ENCODE measurements at regions of chr5 and their contacts with region 1.

Region 1: GRCh38 chr5:180291943-180292831 is at the start of gene MAPK9:
- DNase-seq: peak; percentile 85
- ATAC-seq: peak; percentile 87
- H3K4me3 Mint-ChIP-seq: peak within 1 kb of the TSS; percentile 90
- H3K27ac Mint-ChIP-seq: peak within 1 kb of the TSS; percentile 98
- H3K4me1 Mint-ChIP-seq: peaks cover 37% of the 10 kb centered on the region
- H3K27me3 Mint-ChIP-seq: no peaks in the 10 kb centered on the region
- total RNA-seq, gene MAPK9: 42.6 to 44.6 TPM

Region 2: DNA sequence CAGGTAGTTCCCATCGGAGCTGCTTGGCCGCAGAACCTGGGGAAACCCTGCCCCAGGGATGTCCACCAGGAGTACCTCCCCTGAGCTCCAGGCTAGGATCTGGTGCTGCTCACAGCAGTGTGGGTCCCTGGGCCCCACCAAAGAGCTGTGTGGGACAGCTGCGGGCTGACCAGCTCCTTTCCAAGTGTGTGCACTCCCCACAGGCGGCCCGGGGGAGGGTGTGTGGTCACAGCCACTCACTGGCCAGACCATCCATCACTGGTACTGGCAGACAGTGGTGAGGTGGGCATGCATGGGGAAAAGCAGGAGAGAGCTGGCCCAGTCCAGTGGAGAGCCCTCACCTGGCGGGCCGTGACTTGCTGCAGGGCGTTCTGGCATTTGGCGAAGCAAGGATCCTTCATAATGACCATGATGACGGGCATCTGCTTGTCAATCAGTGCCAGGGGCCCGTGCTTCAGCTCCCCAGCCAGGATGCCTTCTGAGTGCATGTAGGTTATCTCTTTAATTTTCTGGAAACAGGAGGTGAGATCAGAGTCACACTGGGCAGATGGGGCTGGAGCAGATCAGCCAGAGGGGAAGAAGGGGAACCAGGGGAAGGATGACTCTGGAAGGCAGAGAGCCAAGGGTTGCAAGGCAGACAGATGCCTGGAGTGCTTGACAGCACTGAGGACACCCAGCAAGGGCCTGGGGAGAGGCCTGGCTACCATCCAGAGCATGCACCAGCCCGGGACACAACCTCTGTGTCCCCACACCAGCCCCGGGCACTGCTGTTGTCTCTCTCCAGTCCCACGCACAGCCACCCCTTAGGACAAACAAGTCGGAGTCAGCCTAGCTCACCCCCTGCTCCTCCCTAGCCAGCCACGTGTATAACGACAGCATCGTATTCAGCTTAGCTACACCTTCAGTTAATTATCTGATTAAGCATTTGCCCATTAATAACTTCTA is 12.5 kb after region 1 on chr5:
- CTCF ChIA-PET with region 1: interaction called, 10 read pairs
- POLR2A ChIA-PET with region 1: no interaction called
- DNase-seq: no peak
- ATAC-seq: no peak
- H3K4me3 Mint-ChIP-seq: no peak overlapping the region
- H3K27ac Mint-ChIP-seq: no peak overlapping the region
- H3K4me1 Mint-ChIP-seq: no peaks in the 10 kb centered on the region
- H3K27me3 Mint-ChIP-seq: peaks cover 4% of the 10 kb centered on the region

Region 3: DNA sequence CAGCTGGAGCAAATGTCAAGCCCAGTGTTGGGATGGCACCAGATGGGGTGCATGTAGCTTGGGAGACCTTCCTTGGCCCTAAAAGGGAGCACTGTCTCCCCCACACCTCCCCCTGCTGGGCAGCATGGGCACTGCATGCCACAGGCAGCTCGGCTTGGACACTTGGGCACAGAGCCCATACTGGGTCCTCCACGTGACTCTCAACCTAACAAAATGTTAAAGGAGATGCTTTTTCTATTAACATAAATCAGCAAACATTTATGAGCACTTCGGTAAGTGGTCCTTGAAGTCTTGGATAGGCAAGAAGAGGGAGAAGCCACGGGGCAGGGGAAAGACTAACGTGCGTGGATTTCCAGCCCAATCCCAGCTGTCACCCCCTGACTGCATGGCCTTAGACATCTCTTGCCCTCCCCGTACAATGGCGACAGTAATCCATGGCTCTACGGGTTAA is 23.6 kb after region 1 on chr5:
- CTCF ChIA-PET with region 1: interaction called, 100 read pairs
- POLR2A ChIA-PET with region 1: no interaction called
- DNase-seq: peak; percentile 72
- ATAC-seq: peak; percentile 74
- H3K4me3 Mint-ChIP-seq: no peak overlapping the region
- H3K27ac Mint-ChIP-seq: no peak overlapping the region
- H3K4me1 Mint-ChIP-seq: no peaks in the 10 kb centered on the region
- H3K27me3 Mint-ChIP-seq: no peaks in the 10 kb centered on the region

Region 4: GRCh38 chr5:180470966-180471582 is 178.9 kb after region 1 on chr5:
- CTCF ChIA-PET with region 1: interaction called, 32 read pairs
- POLR2A ChIA-PET with region 1: interaction called, 4 read pairs
- DNase-seq: peak; percentile 66
- ATAC-seq: peak; percentile 80
- H3K4me3 Mint-ChIP-seq: no peak overlapping the region
- H3K27ac Mint-ChIP-seq: no peak overlapping the region
- H3K4me1 Mint-ChIP-seq: no peaks in the 10 kb centered on the region
- H3K27me3 Mint-ChIP-seq: peaks cover 4% of the 10 kb centered on the region